Endothelial cell of umbilical vein (primary cell): ENCODE measurements at regions of chr1 and their contacts with region 1.

Region 1: DNA sequence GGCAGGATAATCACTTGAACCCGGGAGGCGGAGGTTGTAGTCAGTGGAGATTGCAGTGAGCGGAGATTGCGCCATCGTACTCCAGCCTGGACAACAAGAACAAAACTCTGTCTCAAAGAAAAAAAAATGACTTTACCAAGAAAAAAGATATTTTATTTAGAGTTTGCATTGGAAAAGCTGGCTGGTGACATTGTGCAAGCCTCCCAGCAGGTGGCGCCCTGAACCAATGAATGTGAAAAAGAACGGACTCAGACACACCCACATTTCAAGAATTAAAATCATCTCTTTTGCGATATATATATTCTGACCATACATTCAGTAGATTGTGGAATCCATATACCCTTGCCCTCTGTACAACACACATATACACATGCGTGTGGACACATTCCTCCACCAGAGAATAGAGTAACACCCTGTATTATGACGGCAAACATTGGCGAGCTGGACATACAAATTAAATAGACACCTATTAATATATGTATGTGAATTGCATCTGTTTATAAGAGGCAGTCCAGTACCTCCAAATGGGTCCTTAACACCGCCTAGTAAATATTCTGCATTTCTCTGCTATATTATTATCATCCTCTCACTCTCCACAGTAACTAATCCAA is 39.0 kb upstream of the CADM3 start:
- DNase-seq: peak; percentile 68
- H3K4me3 ChIP-seq: no peak overlapping the region
- H3K27ac ChIP-seq: no peak overlapping the region
- H3K4me1 ChIP-seq: no peaks in the 10 kb centered on the region
- H3K27me3 ChIP-seq: peaks cover 15 to 16% of the 10 kb centered on the region in 2 experiments
- CTCF ChIP-seq: peak; percentile 76 to 89
- POLR2A ChIP-seq: no peak

Region 2: DNA sequence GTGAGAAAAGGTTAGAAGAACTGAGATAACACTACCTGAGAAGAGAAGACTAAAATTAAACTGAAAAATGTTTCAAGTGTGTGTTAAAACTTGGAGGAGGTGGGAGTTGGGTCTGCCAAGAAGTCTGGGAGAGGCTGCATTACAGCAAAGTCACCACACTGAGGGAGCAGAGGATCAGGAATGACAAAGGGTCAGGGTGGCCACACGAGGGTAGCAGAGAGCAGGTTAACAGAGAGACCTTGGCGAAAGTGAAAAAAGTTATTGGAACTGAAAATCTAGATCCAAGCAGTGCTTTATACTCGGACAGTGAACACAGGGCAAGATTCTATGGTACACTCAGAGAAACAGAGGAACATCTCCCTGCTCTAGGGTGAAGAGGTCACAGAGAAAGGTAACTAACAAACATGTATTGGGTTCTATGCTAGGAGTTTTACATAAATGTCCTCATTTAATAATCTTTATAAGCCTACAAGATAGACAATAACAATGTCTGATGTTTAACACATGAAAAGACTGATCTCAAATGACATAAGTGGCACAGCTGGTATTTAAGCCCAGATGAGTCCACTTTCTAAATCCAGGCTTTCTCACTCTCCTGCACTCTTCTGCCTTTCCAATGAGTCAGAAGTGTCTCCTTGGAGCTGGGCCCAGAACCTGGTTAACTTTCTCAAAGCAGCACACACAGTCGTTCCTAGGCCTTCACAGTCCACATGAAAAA is 28.8 kb after region 1 on chr1:
- CTCF ChIA-PET with region 1: interaction called, 24 read pairs
- POLR2A ChIA-PET with region 1: no interaction called
- dilution Hi-C with region 1: no loop called
- intact Hi-C with region 1: loop called (anchors 2 kb)
- DNase-seq: peak; percentile 86
- H3K4me3 ChIP-seq: no peak overlapping the region
- H3K27ac ChIP-seq: no peak overlapping the region
- H3K4me1 ChIP-seq: peaks cover 7% of the 10 kb centered on the region
- H3K27me3 ChIP-seq: peaks cover 5 to 10% of the 10 kb centered on the region in 2 experiments
- CTCF ChIP-seq: peak; percentile 96 to 99
- POLR2A ChIP-seq: peak; percentile 25

Region 3: GRCh38 chr1:159197561-159198557 is 65.5 kb after region 1 on chr1:
- CTCF ChIA-PET with region 1: interaction called, 47 read pairs
- POLR2A ChIA-PET with region 1: no interaction called
- dilution Hi-C with region 1: no loop called
- intact Hi-C with region 1: loop called (anchors 1 kb)
- DNase-seq: peak; percentile 81
- H3K4me3 ChIP-seq: no peak overlapping the region
- H3K27ac ChIP-seq: no peak overlapping the region
- H3K4me1 ChIP-seq: no peaks in the 10 kb centered on the region
- H3K27me3 ChIP-seq: no peaks in the 10 kb centered on the region
- CTCF ChIP-seq: peak; percentile 85 to 87
- POLR2A ChIP-seq: no peak

Region 4: GRCh38 chr1:159829273-159829634 is 696.9 kb after region 1 on chr1:
- CTCF ChIA-PET with region 1: interaction called, 18 read pairs
- POLR2A ChIA-PET with region 1: no interaction called
- dilution Hi-C with region 1: no loop called
- intact Hi-C with region 1: loop called (anchors 1 kb)
- DNase-seq: peak; percentile 20
- H3K4me3 ChIP-seq: no peak overlapping the region
- H3K27ac ChIP-seq: no peak overlapping the region
- H3K4me1 ChIP-seq: no peaks in the 10 kb centered on the region
- H3K27me3 ChIP-seq: peaks cover 0 to 2% of the 10 kb centered on the region in 2 experiments
- CTCF ChIP-seq: peak; percentile 43 to 57
- POLR2A ChIP-seq: no peak

Region 5: DNA sequence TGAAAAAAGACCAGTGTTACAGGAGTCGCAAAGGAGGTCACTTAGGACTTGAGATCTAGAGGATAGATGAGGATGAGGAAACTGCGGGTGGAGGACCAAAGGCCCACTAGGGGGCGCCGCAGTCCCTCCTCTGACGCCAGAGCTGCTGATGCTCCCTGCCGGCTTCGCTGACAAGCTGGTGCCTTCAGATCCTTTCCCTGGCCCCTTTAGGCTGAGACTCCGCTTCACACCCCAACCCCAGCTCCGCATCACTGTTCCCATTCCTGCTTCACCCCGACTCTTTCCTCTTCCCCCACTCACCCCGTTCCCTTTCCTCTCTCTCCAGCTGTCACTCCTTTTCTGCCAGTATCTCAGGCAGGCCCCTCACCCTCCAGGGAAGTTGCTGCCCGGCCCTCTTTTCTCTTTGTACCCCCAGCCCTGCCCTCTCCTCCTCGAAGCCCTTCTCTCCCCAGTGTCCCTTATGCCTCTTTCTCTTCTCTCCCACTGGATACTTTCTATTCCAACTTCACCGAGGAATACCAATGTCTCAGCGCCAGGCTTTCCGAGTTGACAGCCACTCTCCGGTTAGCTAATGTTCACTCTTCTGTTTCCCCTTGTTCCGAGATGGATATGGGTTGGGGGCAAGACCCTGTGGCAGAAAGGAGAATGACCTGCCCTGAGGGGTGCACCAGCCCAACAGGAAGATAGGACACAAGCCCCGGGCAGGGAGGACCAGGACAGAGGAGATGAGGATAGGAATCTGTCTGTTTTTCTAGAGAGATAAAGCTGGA is 953.5 kb after region 1 on chr1:
- CTCF ChIA-PET with region 1: interaction called, 27 read pairs
- POLR2A ChIA-PET with region 1: no interaction called
- dilution Hi-C with region 1: no loop called
- intact Hi-C with region 1: no loop called
- DNase-seq: peak; percentile 65
- H3K4me3 ChIP-seq: no peak overlapping the region
- H3K27ac ChIP-seq: no peak overlapping the region
- H3K4me1 ChIP-seq: no peaks in the 10 kb centered on the region
- H3K27me3 ChIP-seq: peaks cover 35 to 37% of the 10 kb centered on the region in 2 experiments
- CTCF ChIP-seq: peak; percentile 82 to 99
- POLR2A ChIP-seq: no peak